MCF 10A (cell line): ENCODE measurements at regions of chr6 and their contacts with region 1.

Region 1: GRCh38 chr6:163413345-163414116 is 987 bp upstream of the QKI start:
- DNase-seq: peak; percentile 86
- H3K4me3 Mint-ChIP-seq: peak overlapping the region; percentile 78
- H3K27ac Mint-ChIP-seq: peak overlapping the region; percentile 75
- H3K4me1 Mint-ChIP-seq: peaks cover 4% of the 10 kb centered on the region
- H3K27me3 Mint-ChIP-seq: no peaks in the 10 kb centered on the region
- CTCF ChIP-seq: no peak

Region 2: GRCh38 chr6:163180874-163181541 is 232.5 kb before region 1 on chr6:
- CTCF ChIA-PET with region 1: interaction called, 4 read pairs
- POLR2A ChIA-PET with region 1: interaction called, 4 read pairs
- intact Hi-C with region 1: loop called (anchors 1 kb)
- DNase-seq: peak; percentile 73
- H3K4me3 Mint-ChIP-seq: no peak overlapping the region
- H3K27ac Mint-ChIP-seq: peak overlapping the region; percentile 65
- H3K4me1 Mint-ChIP-seq: no peaks in the 10 kb centered on the region
- H3K27me3 Mint-ChIP-seq: no peaks in the 10 kb centered on the region
- CTCF ChIP-seq: peak; percentile 44

Region 3: GRCh38 chr6:163370464-163371117 is 42.9 kb before region 1 on chr6:
- CTCF ChIA-PET with region 1: no interaction called
- POLR2A ChIA-PET with region 1: no interaction called
- intact Hi-C with region 1: no loop called
- DNase-seq: no peak
- H3K4me3 Mint-ChIP-seq: no peak overlapping the region
- H3K27ac Mint-ChIP-seq: no peak overlapping the region
- H3K4me1 Mint-ChIP-seq: no peaks in the 10 kb centered on the region
- H3K27me3 Mint-ChIP-seq: no peaks in the 10 kb centered on the region
- CTCF ChIP-seq: no peak

Region 4: DNA sequence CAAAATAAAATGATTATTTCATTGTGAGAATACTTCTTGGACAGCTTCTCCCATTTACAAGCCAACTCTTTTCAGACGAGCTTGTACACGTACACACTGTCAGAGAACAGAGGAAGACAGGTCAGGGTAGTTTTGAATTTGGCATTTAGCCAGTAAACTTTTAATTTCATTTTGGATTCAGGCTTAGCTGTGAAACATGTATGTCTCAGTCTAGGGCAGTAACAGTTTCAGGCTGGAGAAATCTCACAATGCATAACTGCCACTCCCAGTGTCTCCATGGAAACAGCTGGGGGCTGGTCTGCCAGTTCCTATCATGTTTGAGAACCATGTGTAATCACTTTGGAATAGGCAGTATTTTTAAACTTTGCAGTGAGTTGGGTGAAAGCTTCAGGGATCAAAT is 21.0 kb before region 1 on chr6:
- CTCF ChIA-PET with region 1: interaction called, 8 read pairs
- POLR2A ChIA-PET with region 1: interaction called, 18 read pairs
- intact Hi-C with region 1: no loop called
- DNase-seq: peak; percentile 73
- H3K4me3 Mint-ChIP-seq: peak overlapping the region; percentile 53
- H3K27ac Mint-ChIP-seq: peak overlapping the region; percentile 76
- H3K4me1 Mint-ChIP-seq: peaks cover 16% of the 10 kb centered on the region
- H3K27me3 Mint-ChIP-seq: no peaks in the 10 kb centered on the region
- CTCF ChIP-seq: no peak

Region 5: DNA sequence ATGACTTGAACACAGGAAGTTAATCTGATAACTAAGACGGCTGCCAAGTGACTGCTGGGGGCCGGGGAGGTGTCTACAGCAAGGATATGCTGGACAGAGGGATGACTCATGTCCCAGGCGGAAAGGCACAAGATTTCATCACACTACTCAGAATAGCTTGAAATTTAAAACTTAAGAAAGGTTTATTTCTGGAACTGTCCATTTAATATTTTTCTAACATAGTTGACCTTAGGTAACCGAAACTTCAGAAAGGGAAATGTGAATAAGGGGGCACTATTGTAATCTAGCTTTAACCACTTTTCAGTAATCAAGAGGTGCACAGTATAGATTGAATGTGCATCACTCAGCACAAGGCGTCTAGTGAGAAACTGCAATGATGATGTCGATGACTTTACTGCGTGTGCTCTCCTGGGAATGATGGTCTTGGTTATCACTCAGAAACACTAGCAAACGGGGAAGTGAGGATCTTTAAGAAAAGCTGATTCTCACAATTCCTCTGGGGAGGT is 172.5 kb after region 1 on chr6:
- CTCF ChIA-PET with region 1: no interaction called
- POLR2A ChIA-PET with region 1: no interaction called
- intact Hi-C with region 1: loop called (anchors 5 kb)
- DNase-seq: peak; percentile 90
- H3K4me3 Mint-ChIP-seq: peak overlapping the region; percentile 41
- H3K27ac Mint-ChIP-seq: peak overlapping the region; percentile 83
- H3K4me1 Mint-ChIP-seq: peaks cover 32% of the 10 kb centered on the region
- H3K27me3 Mint-ChIP-seq: no peaks in the 10 kb centered on the region
- CTCF ChIP-seq: no peak

Region 6: GRCh38 chr6:165231581-165232561 is 1818.3 kb after region 1 on chr6:
- CTCF ChIA-PET with region 1: interaction called, 3 read pairs
- POLR2A ChIA-PET with region 1: no interaction called
- intact Hi-C with region 1: loop called (anchors 5 kb)
- DNase-seq: peak; percentile 69
- H3K4me3 Mint-ChIP-seq: no peak overlapping the region
- H3K27ac Mint-ChIP-seq: peak overlapping the region; percentile 20
- H3K4me1 Mint-ChIP-seq: peaks cover 18% of the 10 kb centered on the region
- H3K27me3 Mint-ChIP-seq: no peaks in the 10 kb centered on the region
- CTCF ChIP-seq: peak; percentile 83